Ascending aorta (tissue), 2 donors: ENCODE measurements at regions of chr10 and their contacts with region 1.

Region 1: DNA sequence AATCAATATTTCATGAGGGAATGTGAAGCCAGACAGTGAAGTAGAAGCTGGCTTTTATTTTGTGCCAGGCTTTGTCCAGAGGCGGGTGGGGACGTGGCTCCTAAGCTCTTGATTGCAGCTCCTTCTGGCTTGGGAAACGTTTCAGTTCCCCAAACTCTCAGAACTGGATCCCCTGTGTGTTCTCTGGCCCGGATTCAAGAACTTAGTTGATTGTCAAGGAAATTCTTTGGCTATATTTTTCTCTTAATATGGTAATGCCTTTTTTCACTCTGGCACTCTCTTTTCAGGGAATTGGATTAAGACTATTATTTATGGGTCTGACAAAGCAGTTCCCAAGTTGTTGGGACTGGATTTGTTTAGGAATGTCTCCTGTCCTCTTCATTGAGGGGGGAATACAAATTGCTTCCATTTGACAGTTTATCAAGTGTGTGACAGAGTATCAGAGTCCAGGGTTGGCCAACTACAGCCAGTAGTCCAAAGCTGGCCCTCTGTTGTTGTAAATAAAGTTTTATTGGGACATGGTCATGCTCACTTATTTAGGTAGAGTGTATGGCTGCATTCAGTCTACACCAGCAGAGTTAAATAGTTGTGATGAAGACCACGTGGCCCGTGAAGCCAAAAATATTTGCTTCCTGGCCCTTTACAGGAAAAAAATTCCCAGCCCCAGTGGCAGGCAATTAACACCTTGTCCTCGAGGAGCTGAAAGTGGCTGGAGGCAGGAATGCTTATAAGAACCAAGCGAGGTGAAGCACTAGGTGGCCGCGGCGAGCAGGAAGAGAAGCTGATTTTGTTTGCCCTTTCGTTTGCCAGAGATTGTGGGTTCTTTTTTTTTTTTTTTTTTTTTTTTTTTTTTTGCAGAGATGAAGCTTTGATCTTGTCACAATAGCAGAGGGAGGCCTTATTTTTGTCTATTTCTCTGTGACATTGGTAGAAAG is 34.3 kb downstream of the HTRA1 start:
- DNase-seq: peak in 1 of 2 donors; percentile 88
- H3K4me3 ChIP-seq: peak overlapping the region in 1 of 2 donors; percentile 2
- H3K27ac ChIP-seq: peak overlapping the region; percentile 79 to 95
- H3K4me1 ChIP-seq: peaks cover 37 to 73% of the 10 kb centered on the region in 2 donors
- H3K27me3 ChIP-seq: no peaks in the 10 kb centered on the region
- CTCF ChIP-seq: no peak

Region 2: DNA sequence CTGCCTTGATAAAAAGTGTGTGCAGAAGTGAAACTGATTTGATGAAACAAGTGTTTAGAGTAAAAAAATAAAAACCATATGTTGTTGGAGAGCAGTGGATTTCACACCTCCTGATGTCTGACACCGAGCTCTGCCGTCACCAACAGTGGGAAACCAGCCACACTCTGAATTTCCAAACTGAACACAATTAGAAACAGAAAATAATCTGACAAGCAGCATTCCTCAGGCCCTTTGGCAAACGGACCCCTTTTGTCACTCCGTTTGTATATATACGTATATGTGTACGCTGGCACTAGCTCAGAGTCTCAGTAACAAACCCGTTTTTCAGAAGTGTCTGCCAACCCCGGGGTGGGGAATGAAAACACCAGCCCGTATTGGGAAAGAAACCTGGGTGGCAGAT is 474.3 kb before region 1 on chr10:
- intact Hi-C with region 1: loop called (anchors 10 kb)
- DNase-seq: no peak
- H3K4me3 ChIP-seq: peak overlapping the region; percentile 30 to 60
- H3K27ac ChIP-seq: peak overlapping the region; percentile 74 to 76
- H3K4me1 ChIP-seq: peaks cover 0 to 7% of the 10 kb centered on the region in 2 donors
- H3K27me3 ChIP-seq: no peaks in the 10 kb centered on the region
- CTCF ChIP-seq: no peak

Region 3: DNA sequence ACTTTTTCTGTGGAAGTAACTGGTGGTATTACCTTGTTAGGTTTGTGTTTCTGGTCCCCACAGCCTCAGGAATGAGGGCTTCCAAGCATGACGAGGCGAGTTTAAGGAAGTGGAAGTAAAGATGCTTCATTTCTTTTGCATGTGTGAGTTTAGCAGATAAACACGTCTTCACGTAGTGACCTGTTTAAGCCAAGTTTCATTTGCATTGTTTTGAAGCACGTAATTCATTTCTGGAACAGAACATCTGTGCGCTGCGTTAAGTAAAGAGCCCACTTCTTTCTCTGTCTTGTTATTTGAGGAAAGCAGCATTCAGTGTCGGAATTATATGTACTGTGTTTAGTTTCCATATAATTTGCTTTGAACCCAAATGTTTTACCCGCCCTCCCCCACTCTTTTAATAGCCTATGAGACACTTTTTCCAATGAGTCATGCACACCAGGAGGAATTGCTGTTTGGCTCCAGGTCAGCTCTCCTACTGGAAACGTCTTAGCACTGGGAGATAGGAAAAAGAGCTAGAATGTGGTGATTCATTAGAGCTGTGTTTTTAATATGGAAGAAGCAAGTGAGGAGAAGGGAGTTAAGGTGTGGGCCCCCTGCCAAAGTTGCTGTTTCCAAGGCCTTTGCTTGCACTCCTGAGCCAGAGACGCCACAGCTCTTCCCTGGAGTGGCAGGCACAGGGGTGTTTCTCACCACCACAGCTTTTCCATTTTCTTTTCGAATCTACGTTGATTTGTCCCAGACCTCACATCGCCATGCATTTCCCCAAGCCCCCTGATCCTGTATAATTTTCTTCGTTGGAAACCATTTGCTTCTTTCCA is 187.8 kb before region 1 on chr10:
- intact Hi-C with region 1: loop called (anchors 2 kb)
- DNase-seq: peak; percentile 25 to 95
- H3K4me3 ChIP-seq: peak overlapping the region; percentile 4 to 40
- H3K27ac ChIP-seq: peak overlapping the region; percentile 92 to 93
- H3K4me1 ChIP-seq: peaks cover 10 to 14% of the 10 kb centered on the region in 2 donors
- H3K27me3 ChIP-seq: no peaks in the 10 kb centered on the region
- CTCF ChIP-seq: no peak

Region 4: DNA sequence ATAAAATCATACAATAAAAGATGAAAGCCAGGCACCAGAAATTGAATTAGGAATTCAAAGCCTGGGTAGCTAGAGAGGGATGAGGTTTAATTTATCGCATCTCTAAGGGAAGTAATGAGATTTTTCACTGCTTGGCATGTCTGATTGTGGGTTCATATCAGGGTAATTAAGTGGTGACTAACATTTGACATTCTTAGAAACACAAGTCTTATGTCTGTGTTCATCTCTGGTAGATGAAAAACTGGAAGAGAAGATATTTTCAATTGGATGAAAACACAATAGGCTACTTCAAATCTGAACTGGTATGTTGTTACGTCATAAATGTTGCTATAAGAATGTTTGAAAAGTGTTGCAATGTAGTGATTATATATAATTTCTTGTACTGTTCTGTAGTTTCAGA is 78.0 kb before region 1 on chr10:
- intact Hi-C with region 1: no loop called
- DNase-seq: no peak
- H3K4me3 ChIP-seq: no peak overlapping the region
- H3K27ac ChIP-seq: no peak overlapping the region
- H3K4me1 ChIP-seq: peaks cover 0 to 5% of the 10 kb centered on the region in 2 donors
- H3K27me3 ChIP-seq: no peaks in the 10 kb centered on the region
- CTCF ChIP-seq: no peak

Region 5: GRCh38 chr10:122461367-122461728 is 34.3 kb before region 1 on chr10 and contains the start of gene HTRA1:
- intact Hi-C with region 1: loop called (anchors 2 kb)
- DNase-seq: peak in 1 of 2 donors; percentile 88
- H3K4me3 ChIP-seq: peak within 1 kb of the TSS; percentile 94 to 96
- H3K27ac ChIP-seq: peak within 1 kb of the TSS; percentile 87 to 93
- H3K4me1 ChIP-seq: peaks cover 6 to 27% of the 10 kb centered on the region in 2 donors
- H3K27me3 ChIP-seq: no peaks in the 10 kb centered on the region
- CTCF ChIP-seq: no peak
- total RNA-seq, gene HTRA1: 112 TPM

Region 6: GRCh38 chr10:122475100-122475499 is 20.6 kb before region 1 on chr10:
- intact Hi-C with region 1: loop called (anchors 2 kb)
- DNase-seq: peak; percentile 42 to 86
- H3K4me3 ChIP-seq: peak overlapping the region; percentile 31 to 47
- H3K27ac ChIP-seq: peak overlapping the region; percentile 80 to 90
- H3K4me1 ChIP-seq: peaks cover 6 to 38% of the 10 kb centered on the region in 2 donors
- H3K27me3 ChIP-seq: no peaks in the 10 kb centered on the region
- CTCF ChIP-seq: no peak

Region 7: DNA sequence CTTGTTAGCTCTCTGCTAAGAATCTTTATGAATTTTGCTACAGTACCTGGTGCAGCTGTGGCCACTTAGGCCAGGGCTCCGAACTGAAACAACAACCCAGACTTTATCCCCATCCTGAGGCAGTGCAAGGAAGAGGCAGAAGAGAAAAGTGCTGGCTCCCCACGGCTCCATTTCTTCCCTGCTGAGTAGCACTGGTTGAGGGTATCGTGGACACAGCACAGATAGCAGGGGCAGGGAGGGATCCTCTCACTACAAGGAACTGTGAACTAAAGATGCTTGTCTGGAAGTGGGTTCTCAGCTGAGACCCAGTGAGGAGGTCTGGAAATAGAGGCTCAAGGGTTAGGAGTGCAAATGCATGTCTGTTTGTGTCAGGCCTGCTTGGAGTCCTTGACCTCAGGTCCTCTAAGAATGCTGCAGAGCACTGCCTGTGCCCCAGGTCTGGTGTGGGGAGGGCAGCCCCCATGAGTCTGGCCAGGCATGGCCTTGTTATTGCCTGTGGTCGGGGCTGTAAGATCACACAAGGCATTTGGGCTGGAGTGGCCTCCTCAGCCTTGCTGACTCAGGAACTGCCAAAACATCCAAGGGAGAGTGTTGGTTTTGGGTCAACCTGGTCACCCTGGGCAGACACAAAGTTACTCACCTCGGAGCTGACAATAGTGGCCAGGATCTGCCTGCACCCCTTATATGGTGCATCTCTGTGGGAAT is 122.9 kb after region 1 on chr10:
- intact Hi-C with region 1: no loop called
- DNase-seq: no peak
- H3K4me3 ChIP-seq: no peak overlapping the region
- H3K27ac ChIP-seq: no peak overlapping the region
- H3K4me1 ChIP-seq: no peaks in the 10 kb centered on the region
- H3K27me3 ChIP-seq: no peaks in the 10 kb centered on the region
- CTCF ChIP-seq: no peak

Region 8: GRCh38 chr10:123021517-123021916 is 525.8 kb after region 1 on chr10:
- intact Hi-C with region 1: no loop called
- DNase-seq: no peak
- H3K4me3 ChIP-seq: no peak overlapping the region
- H3K27ac ChIP-seq: no peak overlapping the region
- H3K4me1 ChIP-seq: no peaks in the 10 kb centered on the region
- H3K27me3 ChIP-seq: no peaks in the 10 kb centered on the region
- CTCF ChIP-seq: no peak